ENCODE measurements at regions of chr11 and their contacts with region 1.

Region 1: DNA sequence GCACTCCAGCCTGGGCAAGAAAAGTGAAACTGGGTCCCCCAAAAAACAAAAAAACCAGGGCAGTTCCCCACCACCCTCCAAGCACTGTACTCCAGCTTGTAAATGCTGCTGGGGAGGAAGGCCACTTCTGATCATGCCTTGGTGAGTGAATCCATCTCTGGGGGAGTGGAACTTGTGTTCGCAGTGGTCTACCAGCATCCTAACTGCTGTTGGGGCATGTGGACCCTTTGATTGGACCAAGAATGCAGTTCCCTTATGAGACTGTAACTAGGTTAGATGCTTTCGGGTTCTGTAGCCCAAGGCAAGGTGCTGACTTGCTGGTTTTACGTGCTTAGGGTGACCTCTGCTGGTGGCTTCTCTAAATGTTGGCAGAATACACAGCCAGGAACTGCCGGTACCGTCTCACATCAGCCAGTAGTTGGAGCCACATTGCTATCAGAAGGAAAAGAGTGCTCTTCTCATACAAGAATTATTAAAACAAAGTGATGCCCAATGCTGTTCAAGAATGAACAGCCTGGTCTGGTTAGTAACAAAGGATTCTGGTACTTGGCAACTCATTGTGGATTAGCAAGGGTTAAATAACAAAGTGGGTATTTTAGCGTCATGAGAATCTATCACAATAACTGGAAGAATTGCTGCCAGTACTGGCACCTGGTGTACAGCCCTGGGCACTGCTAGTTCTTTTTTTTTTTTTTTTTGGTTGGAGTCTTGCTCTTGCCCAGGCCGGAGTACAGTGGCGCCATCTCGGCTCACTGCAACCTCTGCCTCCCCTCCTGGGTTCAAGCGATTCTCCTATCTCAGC is 13.0 kb downstream of the EIF1AD start:
- DNase-seq: peak; percentile 81
- ATAC-seq: peak; percentile 99

Region 2: DNA sequence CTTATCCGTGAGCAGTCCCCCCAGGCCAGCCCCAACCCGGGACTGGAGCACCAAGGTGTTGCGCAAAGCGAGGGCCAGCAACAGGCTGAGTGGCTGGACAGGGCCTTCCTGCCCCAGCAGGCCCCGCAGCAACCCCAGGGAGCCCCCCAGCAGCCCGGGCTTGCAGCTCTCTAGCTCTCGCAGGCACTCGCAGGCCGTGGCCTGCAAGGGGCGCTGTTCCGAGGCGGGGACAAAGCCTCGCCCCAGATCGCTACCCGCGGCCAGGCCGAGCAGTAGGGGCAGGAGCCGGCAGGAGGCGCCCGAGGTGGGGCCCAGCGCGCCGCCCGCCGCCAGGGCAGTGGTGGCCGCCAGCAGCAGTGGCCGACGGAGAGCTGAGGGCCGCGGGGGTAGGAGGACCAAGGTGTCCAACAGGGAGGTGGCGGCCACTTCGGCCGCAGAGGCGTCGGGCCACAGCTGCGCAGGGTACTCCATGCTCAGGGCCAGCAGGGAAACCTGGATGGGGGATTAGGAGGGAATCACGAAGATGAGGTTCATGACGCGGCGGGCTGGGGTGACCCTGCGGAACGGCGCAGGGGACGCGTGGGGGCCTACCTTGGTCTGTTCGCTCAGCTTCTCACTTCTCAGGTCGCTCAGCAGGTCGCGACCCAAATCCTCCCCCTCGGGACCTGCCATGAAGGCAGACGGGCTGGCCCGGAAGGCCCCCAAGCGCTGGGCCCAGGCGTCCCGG is 209.0 kb before region 1 on chr11:
- intact Hi-C with region 1: loop called (anchors 1 kb)
- DNase-seq: peak; percentile 92
- ATAC-seq: peak; percentile 89

Region 3: GRCh38 chr11:65817835-65818742 is 170.9 kb before region 1 on chr11:
- intact Hi-C with region 1: loop called (anchors 1 kb)
- DNase-seq: peak; percentile 98
- ATAC-seq: peak; percentile 98

Region 4: GRCh38 chr11:65873318-65874156 is 115.5 kb before region 1 on chr11:
- intact Hi-C with region 1: no loop called
- DNase-seq: peak; percentile 98
- ATAC-seq: peak; percentile 96

Region 5: DNA sequence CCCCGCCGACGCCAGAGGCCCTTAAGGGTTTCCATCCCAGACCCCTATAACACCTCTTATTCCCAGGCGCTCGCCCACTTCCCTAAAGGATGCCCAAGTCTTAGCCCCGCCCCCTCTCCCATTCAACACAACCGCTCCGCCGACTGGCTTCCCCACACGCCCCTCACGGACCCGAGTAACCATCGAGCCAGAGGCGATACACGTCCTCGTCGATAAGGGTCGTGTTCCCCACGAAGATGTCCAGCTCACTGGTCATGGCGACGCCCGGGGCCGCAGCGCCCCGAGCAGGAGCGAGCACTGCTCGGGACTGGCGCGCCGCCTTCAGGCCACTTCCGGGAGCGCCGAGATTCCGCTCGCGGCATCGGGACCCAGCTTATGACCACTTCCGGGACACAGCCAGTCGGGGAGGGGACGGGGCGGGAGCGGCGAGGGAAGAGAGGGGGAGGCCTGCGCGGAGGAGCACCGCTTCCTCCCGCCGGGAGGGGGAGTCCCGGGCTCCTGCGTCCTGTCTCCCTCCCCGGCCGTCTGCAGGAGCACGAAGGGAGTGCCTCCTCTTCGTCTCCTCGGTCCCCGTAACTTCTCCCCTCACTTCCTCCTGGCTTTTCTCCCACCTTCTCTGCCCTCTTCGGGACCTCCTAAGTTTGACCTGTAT is 100.7 kb before region 1 on chr11 and contains the start of gene FIBP:
- intact Hi-C with region 1: loop called (anchors 1 kb)
- DNase-seq: peak; percentile 99
- ATAC-seq: peak; percentile 88
- total RNA-seq, gene FIBP: 44.7 TPM

Region 6: GRCh38 chr11:66328307-66329144 is 339.5 kb after region 1 on chr11:
- intact Hi-C with region 1: no loop called
- DNase-seq: peak; percentile 88
- ATAC-seq: peak; percentile 73

Measured in Right ventricle myocardium inferior (tissue), 1 donor.